ENCODE measurements at regions of chr1 and their contacts with region 1.

Region 1: DNA sequence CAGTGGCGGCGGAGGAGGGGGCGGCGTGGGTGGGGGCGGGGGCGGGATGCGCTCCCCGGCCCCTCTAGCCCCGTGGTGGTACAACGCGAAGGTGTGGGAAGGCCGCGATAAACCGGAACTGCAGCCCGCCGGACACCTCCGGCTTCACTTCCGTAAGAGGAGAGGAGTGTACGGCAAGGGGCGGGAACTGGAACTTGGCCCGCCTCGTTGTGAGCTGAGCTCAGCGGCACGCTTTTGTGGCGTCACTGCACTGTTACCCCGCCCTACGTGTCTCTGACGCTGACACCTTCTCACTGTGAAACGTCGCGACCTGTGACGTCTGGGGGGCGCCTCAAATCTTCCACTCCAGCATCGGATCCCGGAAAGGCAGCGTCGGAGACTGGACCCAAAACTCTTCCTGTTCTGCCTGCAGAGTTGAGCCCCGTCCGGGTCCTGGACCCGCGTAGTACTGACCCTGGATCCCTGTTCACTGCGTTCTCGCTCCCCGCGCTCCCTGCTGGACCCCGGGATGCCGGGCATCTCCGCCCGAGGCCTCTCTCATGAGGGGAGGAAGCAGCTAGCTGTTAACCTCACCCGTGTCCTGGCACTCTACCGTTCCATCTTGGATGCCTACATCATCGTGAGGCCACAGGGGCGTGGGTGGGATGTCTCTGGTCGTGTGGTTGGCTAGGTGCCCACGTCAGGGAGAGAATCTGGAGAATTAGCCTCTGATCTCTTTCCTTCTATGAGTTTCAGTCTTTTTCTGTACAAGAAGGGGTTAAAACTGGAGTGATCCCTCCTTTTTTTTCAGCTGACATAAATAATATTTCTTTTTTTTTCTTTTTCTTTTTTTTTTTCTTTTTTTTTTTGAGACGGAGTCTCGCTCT is at the start of gene ISG20L2:
- DNase-seq: peak; percentile 92 to 99 (median 92)
- ATAC-seq: peak; percentile 88
- H3K4me3 ChIP-seq: peak within 1 kb of the TSS; percentile 76
- H3K27ac ChIP-seq: peak within 1 kb of the TSS; percentile 82
- H3K4me1 ChIP-seq: peaks cover 13 to 17% of the 10 kb centered on the region in 2 experiments; a peak in 4 of 5 replicates
- H3K27me3 ChIP-seq: no peaks in the 10 kb centered on the region; a peak in 1 of 5 replicates
- CTCF ChIP-seq: 0 out of 6 replicates have a peak, but pooled peaks of 1 of the 3 experiments have one; percentile 9
- EP300 ChIP-seq: peak; percentile 38; the same call in 1 of the 2 replicates
- POLR2A ChIP-seq: peak; percentile 59
- RAD21 ChIP-seq: no peak
- polyA plus RNA-seq, gene ISG20L2: 21.3 to 50.3 TPM

Region 2: DNA sequence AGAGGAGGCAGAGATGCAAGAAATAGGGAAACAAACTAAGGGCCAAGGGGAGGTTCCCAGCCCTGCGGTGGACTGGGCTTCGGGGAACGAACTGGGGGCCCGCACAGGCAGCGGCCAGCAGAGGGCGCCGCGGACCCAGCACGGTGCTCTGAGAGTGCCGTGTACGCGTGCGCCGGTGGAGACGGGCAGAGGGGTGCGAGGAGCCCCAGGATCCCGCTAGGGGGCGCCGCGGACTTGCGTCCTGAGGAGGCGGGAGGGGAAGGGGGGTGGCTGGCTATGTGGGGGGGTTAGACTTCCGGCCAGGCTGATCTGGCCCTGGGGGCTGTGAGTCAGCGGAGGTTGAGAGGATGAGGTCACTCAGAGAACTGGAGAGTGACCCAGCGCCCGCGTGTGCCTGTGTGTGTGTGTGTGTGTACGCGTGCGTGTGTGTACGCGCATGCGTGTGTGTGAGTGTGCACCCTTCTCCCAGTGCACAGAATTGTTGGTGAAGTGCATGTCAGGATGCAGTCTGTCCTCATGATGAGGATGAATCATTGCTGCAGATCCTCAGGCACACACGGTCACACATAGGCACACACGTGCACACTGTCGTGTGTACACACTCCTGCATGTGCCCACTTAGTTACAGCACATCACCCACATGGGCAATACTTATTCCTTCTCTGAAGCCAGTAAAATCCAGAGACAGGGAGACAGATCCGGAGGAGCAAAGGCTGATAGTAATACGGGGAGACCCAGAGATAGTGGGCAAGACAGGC is 68.7 kb before region 1 on chr1:
- CTCF ChIA-PET with region 1: interaction called, 35 read pairs
- POLR2A ChIA-PET with region 1: interaction called, 12 read pairs
- in situ Hi-C with region 1: no loop called
- intact Hi-C with region 1: no loop called
- DNase-seq: peak; percentile 99
- ATAC-seq: peak; percentile 78
- H3K4me3 ChIP-seq: peak overlapping the region; percentile 79
- H3K27ac ChIP-seq: peak overlapping the region; percentile 100
- H3K4me1 ChIP-seq: peaks cover 70 to 79% of the 10 kb centered on the region in 2 experiments
- H3K27me3 ChIP-seq: no peaks in the 10 kb centered on the region
- CTCF ChIP-seq: peak; percentile 98 to 99 (median 99)
- EP300 ChIP-seq: peak; percentile 81
- POLR2A ChIP-seq: peak; percentile 95
- RAD21 ChIP-seq: peak; percentile 92 to 95

Region 3: DNA sequence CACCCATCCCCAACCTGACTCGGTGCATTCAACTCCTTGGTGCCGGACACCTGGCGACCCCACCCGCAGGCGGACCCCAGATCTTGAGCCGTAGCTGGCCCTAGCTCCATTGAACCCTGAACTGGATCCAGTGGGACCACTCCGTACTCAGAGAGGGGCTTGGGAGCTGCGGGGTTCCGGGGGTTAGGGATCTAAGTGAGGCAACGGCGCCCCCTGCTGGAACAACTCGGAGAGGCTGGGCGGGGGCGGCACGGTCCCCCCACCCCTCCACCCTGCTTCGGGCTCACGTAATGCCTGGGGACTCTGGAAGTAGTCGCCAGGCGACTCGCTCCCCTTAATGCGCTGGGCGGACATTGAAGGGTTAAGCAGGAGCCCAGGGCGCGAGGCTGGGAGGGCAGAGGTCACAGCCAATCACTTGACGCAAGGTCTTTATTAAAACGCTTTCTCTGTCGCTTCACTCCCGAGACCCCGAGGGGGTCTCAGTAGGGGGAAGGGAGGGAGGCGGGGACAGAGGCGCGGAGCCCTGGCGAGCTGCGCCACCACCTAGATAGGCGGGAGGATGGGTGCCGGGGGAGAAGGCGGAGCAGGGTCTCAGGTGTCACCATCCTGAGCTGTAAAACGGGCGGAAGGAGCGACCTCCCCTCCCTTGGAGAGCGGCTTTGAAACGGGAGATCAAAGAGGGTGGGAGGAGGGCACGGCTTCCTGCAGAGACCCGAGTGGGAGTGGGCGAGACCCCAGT is 22.7 kb before region 1 on chr1:
- CTCF ChIA-PET with region 1: interaction called, 9 read pairs
- POLR2A ChIA-PET with region 1: interaction called, 7 read pairs
- in situ Hi-C with region 1: no loop called
- intact Hi-C with region 1: loop called (anchors 1 kb)
- DNase-seq: peak; percentile 86 to 96 (median 94)
- ATAC-seq: peak; percentile 91
- H3K4me3 ChIP-seq: peak overlapping the region; percentile 47
- H3K27ac ChIP-seq: peak overlapping the region; percentile 44; the same call in 2 of the 3 replicates
- H3K4me1 ChIP-seq: peaks cover 11 to 30% of the 10 kb centered on the region in 2 experiments; a peak in 4 of 5 replicates
- H3K27me3 ChIP-seq: no peaks in the 10 kb centered on the region
- CTCF ChIP-seq: peak; percentile 89 to 91 (median 89)
- EP300 ChIP-seq: no peak
- POLR2A ChIP-seq: no peak
- RAD21 ChIP-seq: peak; percentile 94 to 96

Region 4: DNA sequence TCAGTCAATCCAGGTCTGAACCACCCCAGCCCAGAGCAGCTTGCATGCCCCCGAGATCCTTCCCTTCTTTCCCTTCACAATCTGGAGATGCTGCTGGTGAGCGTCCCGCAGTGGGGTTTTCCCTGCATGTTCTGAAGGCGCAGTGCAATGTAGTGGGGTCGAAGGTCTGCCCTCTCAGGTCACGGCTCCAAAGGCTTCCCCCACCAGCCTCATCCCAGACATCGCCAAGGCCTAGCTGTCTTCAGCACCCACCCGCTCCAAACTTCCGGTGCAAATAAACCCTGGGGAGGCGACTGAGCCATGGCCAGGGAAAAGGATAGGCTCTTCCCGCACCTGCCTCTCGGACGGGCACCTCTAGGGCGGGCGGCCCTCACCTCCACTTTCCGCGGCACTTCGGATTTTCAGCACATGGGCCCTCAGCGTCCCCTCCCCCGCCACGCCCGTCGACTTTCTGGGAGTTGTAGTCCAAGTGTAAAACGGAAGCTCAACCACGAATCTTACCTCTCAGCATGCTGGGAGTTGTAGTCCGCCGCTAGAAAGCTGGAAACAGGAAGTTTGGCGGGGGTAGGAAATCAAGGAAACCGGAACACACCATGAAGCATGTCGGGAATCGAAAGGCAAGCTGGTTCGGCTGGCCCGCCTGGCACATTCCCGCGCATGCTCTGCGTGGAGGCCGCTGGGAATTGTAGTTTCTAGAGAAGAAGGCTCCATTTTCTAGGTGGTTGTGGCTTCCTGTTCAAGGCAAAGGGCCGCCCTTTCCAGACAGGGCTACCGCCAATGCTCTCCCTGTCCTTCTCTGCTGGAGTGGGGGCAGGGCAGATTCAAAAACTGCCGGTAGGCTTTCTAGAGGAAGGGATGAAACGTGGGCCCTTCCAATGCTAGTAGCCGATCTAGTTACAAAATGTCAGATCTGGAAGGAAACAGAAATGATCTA is 12.1 kb after region 1 on chr1 and contains the start of gene MRPL24:
- CTCF ChIA-PET with region 1: no interaction called
- POLR2A ChIA-PET with region 1: interaction called, 49 read pairs
- in situ Hi-C with region 1: no loop called
- intact Hi-C with region 1: loop called (anchors 1 kb)
- DNase-seq: peak; percentile 81 to 99 (median 90)
- ATAC-seq: peak; percentile 95
- H3K4me3 ChIP-seq: peak within 1 kb of the TSS; percentile 63
- H3K27ac ChIP-seq: peak within 1 kb of the TSS; percentile 82
- H3K4me1 ChIP-seq: peaks cover 24 to 26% of the 10 kb centered on the region in 2 experiments
- H3K27me3 ChIP-seq: no peaks in the 10 kb centered on the region
- CTCF ChIP-seq: no peak; a peak in 1 of 6 replicates
- EP300 ChIP-seq: peak; percentile 31
- POLR2A ChIP-seq: peak; percentile 81
- RAD21 ChIP-seq: peak in 1 of 2 experiments; percentile 12; a peak in 1 of 4 replicates
- polyA plus RNA-seq, gene MRPL24: 206 to 267 TPM

Region 5: DNA sequence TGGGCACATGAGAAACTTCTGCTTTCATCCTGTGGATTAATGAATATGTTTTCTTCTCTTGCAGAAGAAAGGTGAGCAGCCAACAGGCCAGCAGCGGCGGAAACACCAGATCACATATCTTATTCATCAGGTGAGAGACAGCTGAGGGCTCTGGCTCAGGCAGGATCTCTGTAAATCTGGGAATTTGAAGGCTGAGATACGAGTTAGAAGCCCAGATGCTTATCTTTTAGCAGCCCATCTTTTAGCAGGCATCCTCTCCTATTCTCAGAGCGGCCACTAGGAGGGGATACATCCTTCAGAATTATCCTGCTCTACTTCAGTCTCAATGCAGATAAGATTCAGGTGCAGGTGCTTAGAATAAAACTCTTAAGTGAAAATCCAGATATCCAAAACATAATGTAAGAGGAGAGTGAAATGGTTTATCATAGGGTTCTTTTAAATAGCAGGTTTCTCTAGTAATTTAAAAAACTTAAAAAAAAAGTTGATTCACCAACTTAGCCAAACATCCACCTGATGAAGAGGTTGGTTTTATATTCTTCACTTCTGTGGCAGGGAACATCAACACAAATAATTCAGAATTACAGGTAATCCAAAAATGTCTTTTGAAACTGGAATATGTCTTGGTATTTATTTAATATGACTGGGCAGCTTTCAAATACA is 68.5 kb after region 1 on chr1:
- CTCF ChIA-PET with region 1: interaction called, 9 read pairs
- POLR2A ChIA-PET with region 1: interaction called, 8 read pairs
- in situ Hi-C with region 1: no loop called
- intact Hi-C with region 1: loop called (anchors 2 kb)
- DNase-seq: peak; percentile 70 to 77 (median 74)
- ATAC-seq: peak; percentile 85
- H3K4me3 ChIP-seq: no peak overlapping the region
- H3K27ac ChIP-seq: no peak overlapping the region
- H3K4me1 ChIP-seq: no peaks in the 10 kb centered on the region
- H3K27me3 ChIP-seq: no peaks in the 10 kb centered on the region
- CTCF ChIP-seq: peak; percentile 70 to 91 (median 85)
- EP300 ChIP-seq: peak; percentile 29
- POLR2A ChIP-seq: no peak
- RAD21 ChIP-seq: peak; percentile 86 to 89

Region 6: GRCh38 chr1:156892190-156893047 is 163.6 kb after region 1 on chr1:
- CTCF ChIA-PET with region 1: interaction called, 16 read pairs
- POLR2A ChIA-PET with region 1: interaction called, 4 read pairs
- in situ Hi-C with region 1: no loop called
- intact Hi-C with region 1: loop called (anchors 1 kb)
- DNase-seq: peak; percentile 91 to 96 (median 92)
- ATAC-seq: peak; percentile 94
- H3K4me3 ChIP-seq: no peak overlapping the region
- H3K27ac ChIP-seq: no peak overlapping the region; the same call in 2 of the 3 replicates
- H3K4me1 ChIP-seq: peaks cover 30 to 48% of the 10 kb centered on the region in 2 experiments
- H3K27me3 ChIP-seq: no peaks in the 10 kb centered on the region
- CTCF ChIP-seq: peak; percentile 91 to 94 (median 93)
- EP300 ChIP-seq: no peak
- POLR2A ChIP-seq: no peak
- RAD21 ChIP-seq: peak; percentile 87 to 93